Endothelial cell of umbilical vein (primary cell): ENCODE measurements at regions of chr11 and their contacts with region 1.

Region 1: DNA sequence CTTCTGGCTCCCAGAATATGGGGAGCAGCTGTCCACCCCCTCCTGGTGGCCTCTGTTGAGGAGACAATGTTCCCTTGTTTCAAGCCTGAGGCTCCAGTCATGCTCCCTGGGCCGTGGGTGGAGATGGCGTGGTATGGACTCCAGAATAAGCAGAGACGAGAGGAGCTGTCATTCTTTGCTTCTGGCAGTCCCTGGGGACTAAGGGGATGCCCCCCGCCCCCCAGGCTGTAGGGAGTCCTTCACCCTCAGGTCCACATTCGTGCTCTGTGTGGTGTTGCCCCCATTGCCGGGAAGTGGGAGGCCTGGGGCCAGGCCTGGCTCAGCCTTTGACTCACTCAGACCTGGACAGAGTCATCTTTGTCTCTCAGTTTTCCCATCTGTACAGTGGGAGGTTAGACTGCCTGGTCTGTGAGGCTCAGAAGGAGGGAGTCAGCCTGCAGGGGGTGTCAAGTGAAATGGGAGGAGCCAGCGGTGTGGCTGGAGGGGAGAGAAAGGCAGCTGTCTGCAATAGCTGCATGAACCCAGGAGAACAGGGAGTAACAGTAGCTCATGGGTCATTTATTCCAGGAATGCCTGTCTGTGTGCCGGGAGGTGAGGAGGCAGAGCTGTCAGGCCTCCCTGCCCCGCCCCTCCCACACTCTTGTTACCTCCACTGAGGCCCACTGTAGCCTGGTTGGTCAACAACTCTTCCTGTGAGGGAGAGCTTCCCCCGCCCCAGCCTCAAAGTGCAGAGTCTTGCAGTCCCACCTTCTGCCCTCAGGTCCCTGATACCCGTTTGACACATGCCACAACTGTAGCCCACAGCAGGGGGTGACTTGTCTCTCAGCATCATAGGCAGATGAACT is 6.3 kb downstream of the ARHGEF17 start:
- DNase-seq: no peak
- H3K4me3 ChIP-seq: no peak overlapping the region
- H3K27ac ChIP-seq: peak overlapping the region; percentile 56
- H3K4me1 ChIP-seq: peaks cover 35% of the 10 kb centered on the region
- H3K27me3 ChIP-seq: no peaks in the 10 kb centered on the region
- CTCF ChIP-seq: no peak
- POLR2A ChIP-seq: no peak

Region 2: GRCh38 chr11:73262851-73263495 is 51.4 kb before region 1 on chr11:
- CTCF ChIA-PET with region 1: no interaction called
- POLR2A ChIA-PET with region 1: no interaction called
- dilution Hi-C with region 1: no loop called
- intact Hi-C with region 1: no loop called
- DNase-seq: no peak
- H3K4me3 ChIP-seq: no peak overlapping the region
- H3K27ac ChIP-seq: no peak overlapping the region
- H3K4me1 ChIP-seq: peaks cover under 1% of the 10 kb centered on the region
- H3K27me3 ChIP-seq: peaks cover 24 to 25% of the 10 kb centered on the region in 2 experiments
- CTCF ChIP-seq: no peak
- POLR2A ChIP-seq: no peak

Region 3: DNA sequence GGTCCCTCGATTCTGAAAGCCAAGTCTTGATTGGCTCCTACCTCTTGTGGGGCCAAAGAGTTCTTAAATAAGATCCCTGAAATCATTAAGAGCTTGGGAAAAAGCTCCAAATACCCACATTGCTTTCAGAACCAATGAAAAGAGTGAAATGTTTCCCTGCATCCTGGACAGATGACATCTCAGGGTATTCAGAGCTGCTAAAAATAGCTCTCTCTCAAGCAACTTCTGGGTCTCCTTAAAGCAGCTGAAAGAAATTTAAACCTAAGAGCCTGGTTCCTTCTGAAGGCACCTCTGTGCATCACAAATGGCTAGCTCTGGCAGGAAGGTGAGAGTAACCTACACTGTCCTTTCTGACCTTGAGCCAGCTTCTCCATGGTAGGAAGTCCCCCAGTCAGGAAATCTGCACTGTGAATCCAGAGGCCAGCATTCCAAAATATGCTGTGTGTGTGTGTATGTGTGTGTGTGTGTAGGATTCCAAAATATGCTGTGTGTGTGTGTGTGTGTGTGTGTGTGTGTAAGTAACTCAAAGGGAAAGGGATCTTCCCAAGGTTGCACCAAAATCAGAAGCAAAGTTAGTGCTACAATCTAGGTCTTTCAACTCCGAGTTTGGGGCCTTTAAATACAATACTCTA is 112.0 kb after region 1 on chr11:
- CTCF ChIA-PET with region 1: no interaction called
- POLR2A ChIA-PET with region 1: no interaction called
- dilution Hi-C with region 1: no loop called
- intact Hi-C with region 1: no loop called
- DNase-seq: no peak
- H3K4me3 ChIP-seq: no peak overlapping the region
- H3K27ac ChIP-seq: no peak overlapping the region
- H3K4me1 ChIP-seq: no peaks in the 10 kb centered on the region
- H3K27me3 ChIP-seq: no peaks in the 10 kb centered on the region
- CTCF ChIP-seq: no peak
- POLR2A ChIP-seq: no peak

Region 4: GRCh38 chr11:73453562-73453961 is 139.2 kb after region 1 on chr11:
- CTCF ChIA-PET with region 1: no interaction called
- POLR2A ChIA-PET with region 1: interaction called, 17 read pairs
- dilution Hi-C with region 1: no loop called
- intact Hi-C with region 1: no loop called
- DNase-seq: no peak
- H3K4me3 ChIP-seq: no peak overlapping the region
- H3K27ac ChIP-seq: no peak overlapping the region
- H3K4me1 ChIP-seq: no peaks in the 10 kb centered on the region
- H3K27me3 ChIP-seq: no peaks in the 10 kb centered on the region
- CTCF ChIP-seq: no peak
- POLR2A ChIP-seq: no peak